ENCODE measurements at regions of chr18 and their contacts with region 1.

Region 1: GRCh38 chr18:63161761-63162195 is 157.8 kb downstream of the BCL2 start:
- DNase-seq: peak; percentile 39 to 94 (median 75)
- ATAC-seq: peak; percentile 90
- H3K4me3 ChIP-seq: peak overlapping the region; percentile 40
- H3K4me3 Mint-ChIP-seq: peak overlapping the region; percentile 74 to 99 (median 86)
- H3K27ac ChIP-seq: peak overlapping the region; percentile 90
- H3K27ac Mint-ChIP-seq: peak overlapping the region; percentile 93 to 99 (median 95)
- H3K4me1 ChIP-seq: peaks cover 63 to 69% of the 10 kb centered on the region in 2 donors
- H3K4me1 Mint-ChIP-seq: peaks cover 70 to 98% (median 94%) of the 10 kb centered on the region in 7 donors
- H3K27me3 ChIP-seq: no peaks in the 10 kb centered on the region
- H3K27me3 Mint-ChIP-seq: no peaks in the 10 kb centered on the region

Region 2: GRCh38 chr18:62596145-62597005 is 565.4 kb before region 1 on chr18:
- CTCF ChIA-PET with region 1: no interaction called
- POLR2A ChIA-PET with region 1: no interaction called
- intact Hi-C with region 1: no loop called
- DNase-seq: no peak
- ATAC-seq: no peak
- H3K4me3 ChIP-seq: no peak overlapping the region
- H3K4me3 Mint-ChIP-seq: peak overlapping the region in 5 of 10 donors; percentile 10 to 69 (median 44)
- H3K27ac ChIP-seq: no peak overlapping the region
- H3K27ac Mint-ChIP-seq: no peak overlapping the region
- H3K4me1 ChIP-seq: peaks cover 0 to 7% of the 10 kb centered on the region in 2 donors
- H3K4me1 Mint-ChIP-seq: peaks cover 0 to 10% (median 6%) of the 10 kb centered on the region in 7 donors
- H3K27me3 ChIP-seq: peaks cover 0 to 8% of the 10 kb centered on the region in 2 donors
- H3K27me3 Mint-ChIP-seq: peaks cover 47 to 68% (median 50%) of the 10 kb centered on the region in 5 donors

Region 3: GRCh38 chr18:62867534-62867933 is 294.2 kb before region 1 on chr18:
- CTCF ChIA-PET with region 1: no interaction called
- POLR2A ChIA-PET with region 1: no interaction called
- intact Hi-C with region 1: loop called in 1 of 2 experiments (anchors 5 kb)
- DNase-seq: no peak
- ATAC-seq: no peak
- H3K4me3 ChIP-seq: no peak overlapping the region
- H3K4me3 Mint-ChIP-seq: peak overlapping the region in 1 of 10 donors; percentile 5
- H3K27ac ChIP-seq: no peak overlapping the region
- H3K27ac Mint-ChIP-seq: peak overlapping the region in 1 of 9 donors; percentile 14
- H3K4me1 ChIP-seq: peaks cover 3 to 9% of the 10 kb centered on the region in 2 donors
- H3K4me1 Mint-ChIP-seq: peaks cover 12 to 33% (median 21%) of the 10 kb centered on the region in 7 donors
- H3K27me3 ChIP-seq: no peaks in the 10 kb centered on the region
- H3K27me3 Mint-ChIP-seq: no peaks in the 10 kb centered on the region

Region 4: GRCh38 chr18:63111671-63112402 is 49.9 kb before region 1 on chr18:
- CTCF ChIA-PET with region 1: no interaction called
- POLR2A ChIA-PET with region 1: no interaction called
- intact Hi-C with region 1: no loop called
- DNase-seq: no peak
- ATAC-seq: no peak
- H3K4me3 ChIP-seq: no peak overlapping the region
- H3K4me3 Mint-ChIP-seq: peak overlapping the region in 1 of 10 donors; percentile 26
- H3K27ac ChIP-seq: no peak overlapping the region
- H3K27ac Mint-ChIP-seq: no peak overlapping the region
- H3K4me1 ChIP-seq: peaks cover 0 to 7% of the 10 kb centered on the region in 2 donors
- H3K4me1 Mint-ChIP-seq: peaks cover 6 to 22% (median 14%) of the 10 kb centered on the region in 7 donors
- H3K27me3 ChIP-seq: no peaks in the 10 kb centered on the region
- H3K27me3 Mint-ChIP-seq: peaks cover 0 to 21% (median 5%) of the 10 kb centered on the region in 5 donors

Region 5: DNA sequence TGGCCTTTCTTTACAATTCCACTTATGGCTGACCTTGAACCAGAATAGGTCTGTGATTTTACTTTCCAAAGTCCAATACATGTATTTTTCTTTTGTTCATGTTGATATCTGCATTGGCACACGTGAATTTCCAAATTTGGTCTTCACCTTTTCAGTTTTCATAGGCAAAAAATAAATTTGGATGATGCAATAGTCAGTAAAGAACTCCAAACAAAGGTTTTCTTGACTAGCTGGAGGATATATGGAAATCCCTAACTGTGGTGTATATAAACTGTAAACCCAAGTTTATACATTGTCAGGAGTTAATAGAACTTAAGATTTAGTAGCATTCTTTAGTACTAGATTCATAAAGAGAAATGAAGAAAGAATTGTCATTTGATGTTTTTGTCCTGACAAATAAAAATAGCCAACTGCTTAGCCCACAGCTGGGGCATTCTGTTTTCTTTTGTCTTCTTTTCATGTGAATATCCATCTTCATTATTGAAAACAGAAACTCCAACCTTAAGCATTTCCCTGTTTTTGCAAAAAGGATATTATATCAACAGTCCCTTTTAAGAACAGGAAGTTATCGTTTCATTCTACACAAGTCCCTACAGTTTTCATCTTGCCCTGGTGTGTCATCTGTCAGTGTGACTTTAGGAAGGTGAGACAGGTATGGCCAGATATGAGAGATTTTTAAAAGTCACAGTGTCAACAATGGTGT is 24.9 kb after region 1 on chr18:
- CTCF ChIA-PET with region 1: interaction called, 7 read pairs
- POLR2A ChIA-PET with region 1: interaction called, 39 read pairs
- intact Hi-C with region 1: loop called (anchors 2 kb)
- DNase-seq: no peak
- ATAC-seq: no peak
- H3K4me3 ChIP-seq: no peak overlapping the region
- H3K4me3 Mint-ChIP-seq: peak overlapping the region in 8 of 10 donors; percentile 1 to 52 (median 14)
- H3K27ac ChIP-seq: no peak overlapping the region
- H3K27ac Mint-ChIP-seq: peak overlapping the region in 8 of 9 donors; percentile 8 to 86 (median 54)
- H3K4me1 ChIP-seq: peaks cover 6 to 31% of the 10 kb centered on the region in 2 donors
- H3K4me1 Mint-ChIP-seq: peaks cover 50 to 91% (median 80%) of the 10 kb centered on the region in 7 donors
- H3K27me3 ChIP-seq: no peaks in the 10 kb centered on the region
- H3K27me3 Mint-ChIP-seq: no peaks in the 10 kb centered on the region

Region 6: DNA sequence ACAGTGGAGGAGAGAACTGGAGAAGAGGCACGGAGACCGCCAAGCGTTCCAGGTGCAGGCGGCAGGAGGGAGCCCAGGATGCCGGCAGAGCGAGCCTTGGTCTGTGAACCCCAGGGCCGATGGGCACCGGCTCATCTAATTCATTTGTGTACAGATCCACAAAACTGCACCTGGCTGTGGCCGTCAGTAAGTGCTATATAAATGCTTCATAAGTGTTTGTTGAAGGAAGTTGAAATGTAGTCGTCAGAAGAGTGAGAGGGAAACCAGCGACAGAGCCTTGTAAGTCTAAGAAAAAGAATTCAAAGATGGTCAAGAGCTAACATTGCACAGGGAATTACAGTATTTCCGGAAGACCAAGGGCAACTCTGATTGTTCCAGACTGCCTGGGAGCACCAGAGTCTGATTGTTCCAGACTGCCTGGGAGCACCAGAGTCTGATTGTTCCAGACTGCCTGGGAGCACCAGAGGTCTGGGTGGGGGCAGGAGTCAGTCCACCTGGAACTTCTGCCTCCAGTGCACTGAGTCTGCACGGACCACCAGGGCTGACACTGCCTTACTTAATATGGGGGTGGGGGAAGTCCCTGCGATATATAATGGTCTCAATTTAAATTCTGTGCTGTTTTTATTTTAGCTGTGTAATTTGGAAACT is 45.5 kb after region 1 on chr18:
- CTCF ChIA-PET with region 1: interaction called, 3 read pairs
- POLR2A ChIA-PET with region 1: interaction called, 38 read pairs
- intact Hi-C with region 1: no loop called
- DNase-seq: no peak
- ATAC-seq: peak; percentile 46
- H3K4me3 ChIP-seq: peak overlapping the region; percentile 40
- H3K4me3 Mint-ChIP-seq: peak overlapping the region; percentile 72 to 94 (median 81)
- H3K27ac ChIP-seq: peak overlapping the region; percentile 63
- H3K27ac Mint-ChIP-seq: peak overlapping the region; percentile 77 to 96 (median 92)
- H3K4me1 ChIP-seq: peaks cover 58 to 97% of the 10 kb centered on the region in 2 donors
- H3K4me1 Mint-ChIP-seq: peaks cover 77 to 100% (median 95%) of the 10 kb centered on the region in 7 donors
- H3K27me3 ChIP-seq: no peaks in the 10 kb centered on the region
- H3K27me3 Mint-ChIP-seq: no peaks in the 10 kb centered on the region

Region 7: GRCh38 chr18:63311118-63312018 is 149.6 kb after region 1 on chr18:
- CTCF ChIA-PET with region 1: no interaction called
- POLR2A ChIA-PET with region 1: interaction called, 13 read pairs
- intact Hi-C with region 1: no loop called
- DNase-seq: no peak
- ATAC-seq: peak; percentile 30
- H3K4me3 ChIP-seq: no peak overlapping the region
- H3K4me3 Mint-ChIP-seq: peak overlapping the region in 8 of 10 donors; percentile 18 to 99 (median 45)
- H3K27ac ChIP-seq: peak overlapping the region; percentile 94
- H3K27ac Mint-ChIP-seq: peak overlapping the region in 7 of 9 donors; percentile 26 to 98 (median 90)
- H3K4me1 ChIP-seq: peaks cover 29 to 44% of the 10 kb centered on the region in 2 donors
- H3K4me1 Mint-ChIP-seq: peaks cover 59 to 94% (median 90%) of the 10 kb centered on the region in 7 donors
- H3K27me3 ChIP-seq: no peaks in the 10 kb centered on the region
- H3K27me3 Mint-ChIP-seq: no peaks in the 10 kb centered on the region

Measured in naive thymus-derived CD4-positive, alpha-beta T cell (primary cell).